Lower leg skin (tissue), 4 donors: ENCODE measurements at regions of chr1 and their contacts with region 1.

Region 1: GRCh38 chr1:82752046-82752445 is 951.3 kb downstream of the ADGRL2 start:
- DNase-seq: no peak
- H3K4me3 ChIP-seq: no peak overlapping the region
- CTCF ChIP-seq: no peak
- POLR2A ChIP-seq: no peak

Region 2: DNA sequence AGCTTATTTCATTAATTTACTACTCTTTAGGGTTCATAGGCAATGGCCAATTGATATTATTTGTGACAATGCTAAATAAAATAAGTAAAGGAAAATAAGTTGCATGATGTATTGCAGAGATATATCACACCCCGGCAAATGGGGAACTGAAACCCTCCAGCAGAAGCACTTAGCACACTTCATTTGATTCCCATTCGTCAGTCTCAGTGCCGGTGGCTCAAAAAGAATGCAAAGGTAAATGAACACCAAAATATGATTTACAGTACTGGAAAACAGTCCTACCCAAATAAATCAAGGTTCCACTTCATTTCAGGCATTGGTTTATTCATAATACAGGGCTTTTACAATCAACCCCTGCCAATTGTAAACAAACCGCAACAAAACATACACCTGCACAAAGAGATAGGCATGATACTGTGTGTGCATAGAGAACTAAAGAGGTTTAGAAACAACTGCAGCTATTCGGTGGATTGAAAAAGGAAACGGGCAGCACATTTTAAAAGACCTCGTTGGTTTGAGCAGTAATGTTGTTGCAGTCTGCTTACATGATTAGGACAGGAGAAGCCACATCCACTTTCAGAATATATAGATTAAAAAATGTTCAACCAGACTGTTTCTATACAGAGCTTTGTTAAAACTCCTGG is 227.7 kb after region 1 on chr1:
- intact Hi-C with region 1: no loop called
- DNase-seq: no peak
- H3K4me3 ChIP-seq: no peak overlapping the region
- CTCF ChIP-seq: no peak
- POLR2A ChIP-seq: no peak

Region 3: GRCh38 chr1:84122780-84123382 is 1370.8 kb after region 1 on chr1:
- intact Hi-C with region 1: no loop called
- DNase-seq: peak in 1 of 2 donors; percentile 26
- H3K4me3 ChIP-seq: no peak overlapping the region
- CTCF ChIP-seq: no peak
- POLR2A ChIP-seq: no peak

Region 4: GRCh38 chr1:84462118-84462517 is 1710.1 kb after region 1 on chr1:
- intact Hi-C with region 1: loop called (anchors 5 kb)
- DNase-seq: no peak
- H3K4me3 ChIP-seq: no peak overlapping the region
- CTCF ChIP-seq: no peak
- POLR2A ChIP-seq: no peak